ENCODE measurements at regions of chr9 and their contacts with region 1.

Region 1: DNA sequence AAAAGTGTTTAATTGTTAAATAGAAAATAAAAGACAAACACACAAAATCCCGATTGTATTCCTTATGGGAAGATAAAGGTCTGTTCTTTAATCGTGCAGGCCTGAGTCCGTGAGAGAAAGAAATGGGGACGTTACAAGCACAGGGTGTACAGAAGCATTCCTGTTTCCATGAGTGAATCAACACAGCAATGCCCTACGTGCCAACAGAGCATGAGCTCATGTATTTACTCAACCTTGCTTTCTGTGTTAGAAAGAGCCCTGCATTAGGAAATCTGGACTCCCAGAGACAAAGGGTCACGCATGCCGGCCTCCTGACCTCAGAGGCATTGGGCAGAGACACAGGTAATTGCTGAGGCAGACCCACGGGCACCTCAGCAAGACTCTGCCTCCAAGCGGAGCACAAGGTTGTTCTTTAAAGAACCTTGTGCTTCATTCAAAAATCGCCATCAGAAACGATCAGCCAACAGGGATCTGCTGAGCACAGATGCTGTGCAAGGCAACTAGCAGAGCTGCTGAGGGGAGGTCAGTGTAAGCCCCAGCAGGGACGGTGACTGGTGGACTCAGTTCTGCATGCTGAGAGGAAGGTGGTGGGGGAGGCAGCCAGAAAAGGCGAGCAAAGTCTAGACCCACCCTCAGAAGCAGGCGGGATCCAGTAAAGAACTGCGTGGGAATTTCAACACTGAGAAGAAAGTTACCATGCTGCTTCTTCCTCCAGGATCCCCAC is 101.0 kb downstream of the TLE1 start:
- DNase-seq: peak; percentile 49 to 93
- H3K4me3 ChIP-seq: peak overlapping the region in 1 of 2 donors; percentile 11
- H3K27ac ChIP-seq: peak overlapping the region; percentile 83 to 90
- H3K4me1 ChIP-seq: peaks cover 27 to 58% of the 10 kb centered on the region in 2 donors
- H3K27me3 ChIP-seq: no peaks in the 10 kb centered on the region
- CTCF ChIP-seq: no peak

Region 2: DNA sequence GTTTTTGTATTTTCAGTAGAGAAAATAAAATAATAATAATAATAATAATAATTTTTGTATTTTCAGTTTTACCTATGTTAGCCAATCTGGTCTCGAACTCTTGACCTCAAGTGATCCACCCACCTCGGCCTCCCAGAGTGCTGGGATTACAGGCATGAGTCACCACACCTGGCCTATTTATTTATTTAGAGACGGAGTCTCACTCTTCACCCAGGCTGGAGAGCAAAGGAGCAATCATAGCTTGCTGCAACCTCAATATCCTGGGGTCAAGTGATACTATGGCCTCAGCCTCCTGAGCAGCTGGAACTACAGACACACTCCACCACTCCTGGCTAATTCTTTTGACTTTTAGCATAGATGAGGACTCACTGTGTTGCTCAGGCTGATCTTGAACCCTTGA is 66.4 kb before region 1 on chr9:
- intact Hi-C with region 1: loop called (anchors 5 kb)
- DNase-seq: no peak
- H3K4me3 ChIP-seq: no peak overlapping the region
- H3K27ac ChIP-seq: no peak overlapping the region
- H3K4me1 ChIP-seq: no peaks in the 10 kb centered on the region
- H3K27me3 ChIP-seq: no peaks in the 10 kb centered on the region
- CTCF ChIP-seq: no peak

Region 3: GRCh38 chr9:81637276-81637675 is 49.0 kb after region 1 on chr9:
- intact Hi-C with region 1: no loop called
- DNase-seq: no peak
- H3K4me3 ChIP-seq: no peak overlapping the region
- H3K27ac ChIP-seq: no peak overlapping the region
- H3K4me1 ChIP-seq: peaks cover 0 to 3% of the 10 kb centered on the region in 2 donors
- H3K27me3 ChIP-seq: no peaks in the 10 kb centered on the region
- CTCF ChIP-seq: no peak